ENCODE measurements at regions of chr9 and their contacts with region 1.

Region 1: DNA sequence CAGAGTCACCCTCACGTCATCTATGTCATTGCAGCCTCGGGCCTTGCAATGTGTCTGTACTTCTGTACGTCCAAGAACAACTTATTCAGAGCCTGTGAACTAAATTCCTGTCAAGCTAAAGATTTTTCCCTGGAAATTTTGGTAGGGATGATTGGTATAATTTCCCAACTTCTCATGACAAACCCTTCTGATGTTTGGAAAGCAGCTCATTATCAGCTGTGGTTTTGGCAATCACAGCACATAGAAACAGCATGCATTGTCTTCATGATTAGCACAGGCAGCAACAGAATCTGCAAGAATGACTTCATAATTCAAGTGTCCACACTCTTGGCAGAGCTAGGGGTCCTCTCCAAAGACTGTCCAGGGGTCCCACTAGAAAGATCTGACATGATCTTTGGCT is 49.5 kb downstream of the APBA1 start:
- DNase-seq: no peak
- ATAC-seq: no peak
- H3K4me3 ChIP-seq: no peak overlapping the region
- H3K27ac ChIP-seq: no peak overlapping the region
- H3K4me1 ChIP-seq: peaks cover 0 to 13% (median 0%) of the 10 kb centered on the region in 12 donors
- H3K27me3 ChIP-seq: no peaks in the 10 kb centered on the region
- CTCF ChIP-seq: no peak
- POLR2A ChIP-seq: no peak

Region 2: DNA sequence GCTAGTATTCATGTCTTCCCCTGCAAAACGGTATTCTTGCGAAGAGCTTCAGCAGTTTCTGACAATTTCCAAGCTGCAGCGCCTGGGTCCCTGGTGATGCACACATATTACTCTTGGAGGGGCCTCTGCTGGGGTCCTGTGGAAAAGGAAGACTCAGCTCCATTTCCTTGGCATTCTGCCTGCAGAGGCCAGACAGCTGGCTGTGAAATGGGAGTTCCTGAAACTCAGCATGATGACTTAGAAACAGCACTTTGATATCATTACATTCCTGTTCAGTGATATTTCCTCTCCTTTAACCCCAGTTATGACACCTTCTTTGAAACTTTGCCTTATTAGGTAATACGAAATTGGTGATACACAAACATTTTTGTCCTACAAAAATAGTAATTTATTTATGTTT is 49.0 kb before region 1 on chr9:
- intact Hi-C with region 1: loop called in 1 of 10 experiments (anchors 5 kb)
- DNase-seq: no peak
- ATAC-seq: no peak
- H3K4me3 ChIP-seq: no peak overlapping the region
- H3K27ac ChIP-seq: no peak overlapping the region
- H3K4me1 ChIP-seq: peaks cover 0 to 11% (median 2%) of the 10 kb centered on the region in 12 donors
- H3K27me3 ChIP-seq: no peaks in the 10 kb centered on the region
- CTCF ChIP-seq: no peak
- POLR2A ChIP-seq: no peak

Measured in heart left ventricle (tissue), 16 donors.